Activated CD4-positive, alpha-beta T cell treated with anti-CD3 and anti-CD28 coated beads, Interleukin-2, amount 10 ng/mL, durations not matched to agents 24 days and 14 days (primary cell): ENCODE measurements at regions of chr2 and their contacts with region 1.

Region 1: GRCh38 chr2:98736464-98736889 is 5.5 kb upstream of the MGAT4A start:
- DNase-seq: peak; percentile 81
- H3K4me3 Mint-ChIP-seq: peak overlapping the region; percentile 69
- H3K27ac Mint-ChIP-seq: peak overlapping the region; percentile 80
- H3K4me1 Mint-ChIP-seq: peaks cover 58% of the 10 kb centered on the region
- H3K27me3 Mint-ChIP-seq: no peaks in the 10 kb centered on the region

Region 2: GRCh38 chr2:98757904-98758421 is 21.5 kb after region 1 on chr2:
- intact Hi-C with region 1: loop called (anchors 1 kb)
- DNase-seq: peak; percentile 86
- H3K4me3 Mint-ChIP-seq: peak overlapping the region; percentile 78
- H3K27ac Mint-ChIP-seq: peak overlapping the region; percentile 94
- H3K4me1 Mint-ChIP-seq: peaks cover 54% of the 10 kb centered on the region
- H3K27me3 Mint-ChIP-seq: no peaks in the 10 kb centered on the region